GM13977 (cell line): ENCODE measurements at regions of chr1 and their contacts with region 1.

Region 1: DNA sequence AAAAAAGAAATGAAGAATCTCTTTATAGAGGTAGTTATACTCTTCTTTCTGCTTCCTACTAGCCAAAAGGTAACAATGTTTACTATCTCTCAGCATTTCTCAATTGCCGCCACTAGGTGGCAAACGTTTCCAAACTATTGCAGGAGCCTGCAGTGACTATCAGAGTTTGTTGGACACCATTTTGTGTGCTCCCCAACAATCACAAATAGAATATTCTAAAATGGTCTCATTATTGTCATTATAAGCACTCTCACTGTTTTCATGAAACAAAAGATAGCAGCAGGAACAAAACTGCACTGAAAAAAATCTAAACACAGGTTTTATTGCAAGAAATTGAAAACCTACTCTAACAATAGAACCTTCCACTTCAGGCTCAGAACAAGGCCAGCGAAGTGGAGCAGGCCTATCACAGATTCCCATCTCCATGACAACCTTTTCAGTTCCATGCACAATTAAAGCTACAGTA is 83.9 kb upstream of the PLPPR4 start:
- DNase-seq: peak; percentile 35
- CTCF ChIP-seq: peak; percentile 75

Region 2: GRCh38 chr1:97886199-97886598 is 1294.2 kb before region 1 on chr1:
- in situ Hi-C with region 1: no loop called
- DNase-seq: no peak
- CTCF ChIP-seq: no peak

Region 3: DNA sequence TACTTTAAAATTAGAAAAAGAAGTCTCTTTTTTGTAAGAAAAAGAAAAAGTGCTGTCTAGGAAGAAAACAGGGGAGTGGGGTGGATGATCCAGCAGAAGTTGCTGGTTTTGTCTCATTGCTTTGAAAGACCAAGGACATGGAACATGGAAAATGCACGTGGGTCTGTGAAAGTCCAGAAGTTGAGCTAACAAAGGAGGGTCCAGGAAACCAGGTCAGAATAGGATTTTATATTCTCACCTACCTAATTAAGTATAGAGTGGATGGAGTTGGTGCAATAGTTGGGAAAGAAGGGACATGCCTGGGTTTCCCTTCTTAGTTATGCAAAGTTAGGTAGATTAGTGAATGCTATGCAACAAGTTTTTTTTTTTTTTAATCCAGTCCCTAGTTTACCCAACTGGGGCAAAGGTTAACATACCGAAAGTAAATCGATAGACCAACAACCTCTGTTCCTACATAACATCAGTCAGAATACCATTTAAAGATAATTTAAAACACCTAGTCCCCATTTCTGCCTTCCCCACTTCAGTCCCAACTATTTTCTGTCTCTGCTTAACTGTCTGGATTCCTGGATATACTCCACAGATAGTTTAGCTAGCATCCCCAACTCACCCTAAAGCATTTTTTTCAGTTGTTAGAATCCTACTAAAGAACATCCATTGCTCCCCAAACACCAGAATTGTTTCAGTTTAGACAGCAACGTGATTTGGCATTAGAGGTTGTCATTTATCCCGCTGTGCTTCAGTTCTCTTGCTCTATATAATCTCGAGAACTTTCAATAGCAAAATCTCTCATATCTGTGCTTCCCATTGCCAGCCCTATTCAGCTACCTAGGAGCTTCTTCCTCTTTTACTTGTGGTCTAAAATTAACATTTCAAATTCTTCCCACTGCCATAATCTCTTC is 70.0 kb before region 1 on chr1:
- in situ Hi-C with region 1: no loop called
- DNase-seq: no peak
- CTCF ChIP-seq: no peak

Region 4: GRCh38 chr1:99252630-99253029 is 72.3 kb after region 1 on chr1:
- in situ Hi-C with region 1: no loop called
- DNase-seq: no peak
- CTCF ChIP-seq: no peak

Region 5: GRCh38 chr1:99481391-99481996 is 301.1 kb after region 1 on chr1:
- in situ Hi-C with region 1: loop called (anchors 25 kb)
- DNase-seq: peak; percentile 16
- CTCF ChIP-seq: peak; percentile 60

Region 6: GRCh38 chr1:99685516-99686180 is 505.3 kb after region 1 on chr1:
- in situ Hi-C with region 1: loop called (anchors 25 kb)
- DNase-seq: peak; percentile 8
- CTCF ChIP-seq: peak; percentile 57